Activated T-helper 1 cell treated with anti-CD3 and anti-CD28 coated beads, Interleukin-12 subunit alpha, Interleukin-12 subunit beta, Interleukin-2, Interleukin-4 antibody, amounts not matched to agents 30 ng/mL and 10 ng/mL and 1 ng/mL, durations not matched to agents 14 hours and 24 hours and 36 hours (primary cell): ENCODE measurements at regions of chr17 and their contacts with region 1.

Region 1: DNA sequence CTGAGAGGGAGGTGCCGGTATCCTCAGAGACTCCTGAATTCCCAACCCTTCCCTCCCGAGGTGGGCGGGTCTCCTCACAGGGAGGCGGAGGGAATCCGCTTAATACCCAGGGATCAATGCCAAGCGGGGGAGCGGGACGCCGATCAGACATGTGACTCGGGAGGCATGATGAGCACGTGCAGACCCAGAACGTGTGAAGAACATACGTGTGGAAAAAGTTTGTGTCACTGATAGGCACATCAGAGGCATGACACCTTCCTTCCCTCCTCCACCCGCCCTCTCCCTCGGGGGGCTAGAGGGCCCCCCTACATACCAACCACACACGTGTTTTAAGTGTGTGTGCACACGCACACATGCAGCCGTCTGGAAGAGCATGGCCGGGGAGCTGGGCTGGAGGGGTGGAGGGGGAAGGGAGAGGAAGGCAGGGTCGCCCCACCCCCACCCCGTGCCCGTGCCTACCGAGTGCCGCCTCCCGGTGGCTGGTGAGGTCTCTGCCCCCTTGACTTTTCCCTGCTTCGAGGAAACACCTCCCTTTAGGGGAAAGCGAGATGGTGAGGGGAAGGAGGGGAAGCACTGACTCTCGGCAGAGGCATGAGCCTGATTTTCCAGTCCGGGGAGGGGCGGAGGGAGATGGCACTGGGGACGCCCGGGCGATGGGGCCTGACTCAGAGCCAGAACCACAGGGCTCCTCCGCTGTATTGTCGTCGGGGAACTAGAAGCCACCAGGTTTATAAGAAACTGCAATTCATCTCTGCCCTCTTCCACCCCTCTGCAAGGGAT is 12.1 kb upstream of the TBX21 start:
- DNase-seq: peak; percentile 85
- H3K4me3 Mint-ChIP-seq: peak overlapping the region; percentile 78
- H3K27ac Mint-ChIP-seq: peak overlapping the region; percentile 95
- H3K4me1 Mint-ChIP-seq: peaks cover 83% of the 10 kb centered on the region
- H3K27me3 Mint-ChIP-seq: no peaks in the 10 kb centered on the region

Region 2: GRCh38 chr17:47663912-47664625 is 56.9 kb before region 1 on chr17:
- intact Hi-C with region 1: loop called (anchors 5 kb)
- DNase-seq: peak; percentile 43
- H3K4me3 Mint-ChIP-seq: peak overlapping the region; percentile 30
- H3K27ac Mint-ChIP-seq: peak overlapping the region; percentile 70
- H3K4me1 Mint-ChIP-seq: peaks cover 38% of the 10 kb centered on the region
- H3K27me3 Mint-ChIP-seq: no peaks in the 10 kb centered on the region

Region 3: GRCh38 chr17:47705536-47706530 is 15.1 kb before region 1 on chr17:
- intact Hi-C with region 1: loop called (anchors 1 kb)
- DNase-seq: peak; percentile 44
- H3K4me3 Mint-ChIP-seq: peak overlapping the region; percentile 66
- H3K27ac Mint-ChIP-seq: peak overlapping the region; percentile 84
- H3K4me1 Mint-ChIP-seq: peaks cover 76% of the 10 kb centered on the region
- H3K27me3 Mint-ChIP-seq: no peaks in the 10 kb centered on the region

Region 4: DNA sequence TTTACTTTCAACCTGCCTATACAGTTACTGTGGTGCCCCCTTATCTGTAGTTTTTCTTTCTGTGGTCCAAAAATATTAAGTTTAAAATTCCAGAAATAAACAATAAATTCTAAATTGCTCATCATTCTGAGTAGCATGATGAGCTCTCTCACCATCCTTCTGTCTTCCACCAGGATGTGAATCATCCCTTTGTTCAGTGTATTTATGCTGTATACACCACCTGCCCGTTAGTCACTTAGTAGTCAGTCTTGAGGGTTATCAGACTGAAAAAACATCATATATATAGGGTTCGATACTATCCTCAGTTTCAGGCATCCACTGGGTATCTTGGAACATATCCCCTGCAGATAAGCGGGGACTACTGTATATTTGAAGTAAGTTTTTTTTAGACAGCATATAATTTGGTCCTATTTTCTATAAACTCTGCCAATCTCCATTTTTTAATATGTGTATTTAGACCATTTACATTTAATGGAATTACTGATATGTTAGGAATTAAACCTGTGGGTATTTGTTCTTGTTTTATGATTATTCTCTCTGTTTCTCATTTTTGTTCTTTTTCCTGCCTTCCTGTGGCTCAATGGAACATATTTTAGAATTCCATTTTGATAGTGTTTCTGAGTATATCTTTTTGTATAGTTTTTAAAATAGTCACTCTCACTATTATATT is 43.1 kb after region 1 on chr17:
- intact Hi-C with region 1: no loop called
- DNase-seq: no peak
- H3K4me3 Mint-ChIP-seq: no peak overlapping the region
- H3K27ac Mint-ChIP-seq: no peak overlapping the region
- H3K4me1 Mint-ChIP-seq: peaks cover 6% of the 10 kb centered on the region
- H3K27me3 Mint-ChIP-seq: peaks cover 34% of the 10 kb centered on the region